ENCODE measurements at regions of chr20 and their contacts with region 1.

Region 1: DNA sequence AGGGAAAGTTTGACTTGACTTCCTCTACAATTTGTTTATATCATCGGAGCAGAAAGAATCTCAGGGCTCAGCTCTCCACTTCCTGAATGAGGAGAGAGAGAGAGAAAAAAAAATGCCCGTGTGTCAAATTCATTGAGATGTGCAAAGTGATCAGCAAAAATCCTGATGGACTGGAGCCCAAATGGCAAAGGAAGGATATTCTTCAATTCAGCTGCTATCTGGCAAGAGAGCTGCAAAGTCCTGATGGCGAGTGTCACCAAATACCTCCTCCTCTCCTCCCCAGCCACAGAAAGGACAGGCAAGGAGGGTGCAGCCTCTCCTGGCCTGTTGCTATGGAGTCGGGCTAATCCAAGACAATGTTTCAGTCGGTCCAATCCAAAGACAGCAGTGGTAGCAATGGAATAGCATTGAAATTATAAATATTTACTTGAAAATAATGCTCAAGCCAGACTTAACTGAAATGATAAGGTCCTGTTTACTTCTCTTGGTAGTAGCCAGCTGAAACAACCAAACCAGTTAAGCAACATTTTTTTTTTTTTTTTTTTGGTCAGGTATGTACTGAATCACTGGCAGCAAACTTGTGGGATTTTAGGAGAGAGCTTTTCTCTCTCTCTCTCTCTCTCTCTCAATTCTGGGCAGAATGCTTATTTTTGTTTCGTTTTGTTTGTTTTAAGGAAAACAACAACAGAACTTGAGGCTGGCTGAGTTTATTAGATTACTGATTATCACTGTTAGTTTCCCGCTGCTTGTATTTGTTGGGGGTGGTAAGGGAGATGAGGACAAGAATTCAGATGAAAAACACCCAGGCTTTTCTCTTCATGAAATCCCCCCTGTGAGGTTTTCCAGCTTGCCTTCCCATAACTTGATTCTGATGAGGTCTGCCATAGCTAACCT is 204.2 kb downstream of the BCAS1 start:
- DNase-seq: no peak
- ATAC-seq: no peak
- H3K4me3 ChIP-seq: peak overlapping the region in 1 of 2 donors; percentile 3
- H3K4me3 Mint-ChIP-seq: peak overlapping the region; percentile 55 to 61 (median 57)
- H3K27ac ChIP-seq: peak overlapping the region; percentile 78
- H3K27ac Mint-ChIP-seq: peak overlapping the region; percentile 93 to 97
- H3K4me1 ChIP-seq: peaks cover 39 to 48% of the 10 kb centered on the region in 2 experiments
- H3K4me1 Mint-ChIP-seq: peaks cover 54 to 66% (median 63%) of the 10 kb centered on the region in 3 donors
- H3K27me3 ChIP-seq: no peaks in the 10 kb centered on the region
- H3K27me3 Mint-ChIP-seq: no peaks in the 10 kb centered on the region

Region 2: DNA sequence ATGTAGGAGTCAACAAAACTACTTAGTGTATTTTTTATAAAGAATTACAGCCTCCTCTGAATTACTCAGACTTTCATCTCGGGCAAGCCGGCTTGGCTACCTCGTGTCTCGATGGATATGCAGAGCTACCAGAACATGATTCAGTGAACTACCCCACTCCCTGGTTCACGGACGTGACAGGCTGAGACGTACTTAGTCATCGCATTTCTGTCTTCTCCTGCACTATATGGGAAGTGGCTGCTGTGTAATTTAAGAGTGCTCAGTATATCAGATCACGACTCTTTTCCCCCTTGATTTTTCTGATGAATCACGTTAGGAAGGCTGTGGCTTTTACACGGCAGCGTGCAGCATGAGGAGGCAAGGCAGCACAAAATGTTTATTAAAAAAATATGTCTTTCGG is 1371.9 kb before region 1 on chr20:
- CTCF ChIA-PET with region 1: no interaction called
- POLR2A ChIA-PET with region 1: no interaction called
- DNase-seq: peak in 10 of 35 experiments; percentile 1 to 41 (median 10)
- ATAC-seq: peak; percentile 70 to 96 (median 91)
- H3K4me3 ChIP-seq: no peak overlapping the region
- H3K4me3 Mint-ChIP-seq: peak overlapping the region; percentile 67 to 70 (median 68)
- H3K27ac ChIP-seq: no peak overlapping the region
- H3K27ac Mint-ChIP-seq: peak overlapping the region; percentile 24 to 60
- H3K4me1 ChIP-seq: peaks cover 0 to 9% of the 10 kb centered on the region in 2 experiments
- H3K4me1 Mint-ChIP-seq: peaks cover 18 to 19% (median 19%) of the 10 kb centered on the region in 3 donors
- H3K27me3 ChIP-seq: no peaks in the 10 kb centered on the region
- H3K27me3 Mint-ChIP-seq: peaks cover 0 to 14% of the 10 kb centered on the region in 2 donors

Region 3: GRCh38 chr20:53842301-53843099 is 23.6 kb before region 1 on chr20:
- CTCF ChIA-PET with region 1: interaction called in 1 of 2 experiments, 10 read pairs
- POLR2A ChIA-PET with region 1: no interaction called
- DNase-seq: peak in 20 of 35 experiments; percentile 8 to 69 (median 26)
- ATAC-seq: peak; percentile 9 to 50 (median 18)
- H3K4me3 ChIP-seq: no peak overlapping the region
- H3K4me3 Mint-ChIP-seq: peak overlapping the region; percentile 14 to 67 (median 19)
- H3K27ac ChIP-seq: peak overlapping the region; percentile 84
- H3K27ac Mint-ChIP-seq: peak overlapping the region; percentile 89 to 91
- H3K4me1 ChIP-seq: peaks cover 66 to 79% of the 10 kb centered on the region in 2 experiments
- H3K4me1 Mint-ChIP-seq: peaks cover 88 to 91% (median 90%) of the 10 kb centered on the region in 3 donors
- H3K27me3 ChIP-seq: no peaks in the 10 kb centered on the region
- H3K27me3 Mint-ChIP-seq: no peaks in the 10 kb centered on the region

Region 4: GRCh38 chr20:53855733-53856132 is 10.4 kb before region 1 on chr20:
- CTCF ChIA-PET with region 1: no interaction called
- POLR2A ChIA-PET with region 1: no interaction called
- DNase-seq: no peak
- ATAC-seq: peak in 1 of 4 experiments; percentile 52
- H3K4me3 ChIP-seq: no peak overlapping the region
- H3K4me3 Mint-ChIP-seq: peak overlapping the region in 1 of 3 donors; percentile 14
- H3K27ac ChIP-seq: no peak overlapping the region
- H3K27ac Mint-ChIP-seq: peak overlapping the region; percentile 70 to 84
- H3K4me1 ChIP-seq: peaks cover 8 to 22% of the 10 kb centered on the region in 2 experiments
- H3K4me1 Mint-ChIP-seq: peaks cover 28 to 38% (median 30%) of the 10 kb centered on the region in 3 donors
- H3K27me3 ChIP-seq: no peaks in the 10 kb centered on the region
- H3K27me3 Mint-ChIP-seq: no peaks in the 10 kb centered on the region

Measured in T-cell (primary cell).